Cardiac septum (tissue), 1 donor: ENCODE measurements at regions of chr1 and their contacts with region 1.

Region 1: DNA sequence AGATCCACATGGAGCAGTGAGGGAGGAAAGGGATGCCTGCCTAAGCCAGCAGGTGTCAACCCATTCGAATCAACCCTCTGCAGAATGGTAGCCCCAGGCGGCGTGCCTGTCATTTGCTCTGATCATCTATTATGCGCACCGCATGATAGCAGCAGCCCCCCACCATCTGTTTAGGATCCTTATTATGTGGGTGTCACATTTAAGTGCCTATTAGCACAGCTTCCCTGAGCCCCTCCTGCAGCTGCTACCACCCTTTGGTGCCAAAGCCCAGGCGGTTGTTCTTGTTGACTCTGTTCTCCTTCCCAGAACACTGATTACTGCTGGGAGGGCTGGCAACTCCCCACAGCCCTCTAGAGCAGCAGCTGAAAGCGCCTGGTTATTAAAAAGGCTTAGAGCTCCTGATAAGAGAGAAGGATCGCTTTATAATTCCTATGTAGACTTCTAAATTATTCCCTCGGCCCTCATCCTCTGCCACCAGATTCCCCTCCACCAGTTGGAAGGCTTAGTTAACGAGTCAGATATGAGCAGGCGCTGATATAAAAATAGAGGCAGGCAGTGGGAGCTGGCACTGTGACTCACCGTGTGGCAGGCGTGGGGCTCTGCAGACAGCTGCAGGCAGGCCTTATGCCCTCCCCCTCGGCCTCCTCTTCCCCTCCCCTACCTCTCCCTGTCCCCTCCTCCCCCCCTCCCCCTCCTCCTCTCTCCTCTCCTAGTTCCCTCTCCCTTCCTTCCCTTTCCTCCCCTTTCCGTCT is 23.0 kb downstream of the ACTA1 start:
- DNase-seq: peak; percentile 88

Region 2: GRCh38 chr1:229370601-229371021 is 40.3 kb before region 1 on chr1:
- intact Hi-C with region 1: loop called (anchors 5 kb)
- DNase-seq: peak; percentile 86

Region 3: GRCh38 chr1:229430761-229431283 is 20.0 kb after region 1 on chr1:
- intact Hi-C with region 1: loop called (anchors 1 kb)
- DNase-seq: no peak

Region 4: DNA sequence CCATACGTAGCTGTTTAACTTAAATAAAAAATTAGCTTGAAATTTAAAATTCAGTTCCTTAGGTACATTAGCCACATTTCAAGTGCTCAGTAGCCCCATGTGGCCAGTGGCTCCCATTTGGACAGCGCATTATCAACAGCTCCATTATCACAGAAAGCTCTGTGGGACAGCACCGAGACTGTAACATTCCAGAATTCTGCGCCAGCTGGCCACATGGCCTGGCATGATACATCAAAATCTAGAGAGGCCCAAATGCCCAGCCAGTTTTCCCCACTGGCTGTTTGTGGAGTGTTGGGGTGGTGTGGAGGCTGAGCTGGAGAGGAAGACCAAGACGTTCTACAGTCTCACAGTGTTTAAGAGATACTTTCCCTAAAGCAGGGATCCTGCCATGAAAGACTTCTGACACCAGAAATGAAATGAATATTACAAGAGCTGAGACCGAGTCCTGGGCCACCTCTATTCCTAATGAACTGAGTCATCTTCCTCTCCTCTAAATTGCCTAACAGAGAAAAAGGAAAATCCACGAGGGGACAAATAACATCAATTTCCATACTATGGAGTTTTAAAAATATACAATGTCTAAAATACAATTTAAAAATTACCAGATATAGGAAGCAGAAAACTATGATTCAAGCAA is 50.3 kb after region 1 on chr1:
- intact Hi-C with region 1: loop called (anchors 1 kb)
- DNase-seq: peak; percentile 81

Region 5: DNA sequence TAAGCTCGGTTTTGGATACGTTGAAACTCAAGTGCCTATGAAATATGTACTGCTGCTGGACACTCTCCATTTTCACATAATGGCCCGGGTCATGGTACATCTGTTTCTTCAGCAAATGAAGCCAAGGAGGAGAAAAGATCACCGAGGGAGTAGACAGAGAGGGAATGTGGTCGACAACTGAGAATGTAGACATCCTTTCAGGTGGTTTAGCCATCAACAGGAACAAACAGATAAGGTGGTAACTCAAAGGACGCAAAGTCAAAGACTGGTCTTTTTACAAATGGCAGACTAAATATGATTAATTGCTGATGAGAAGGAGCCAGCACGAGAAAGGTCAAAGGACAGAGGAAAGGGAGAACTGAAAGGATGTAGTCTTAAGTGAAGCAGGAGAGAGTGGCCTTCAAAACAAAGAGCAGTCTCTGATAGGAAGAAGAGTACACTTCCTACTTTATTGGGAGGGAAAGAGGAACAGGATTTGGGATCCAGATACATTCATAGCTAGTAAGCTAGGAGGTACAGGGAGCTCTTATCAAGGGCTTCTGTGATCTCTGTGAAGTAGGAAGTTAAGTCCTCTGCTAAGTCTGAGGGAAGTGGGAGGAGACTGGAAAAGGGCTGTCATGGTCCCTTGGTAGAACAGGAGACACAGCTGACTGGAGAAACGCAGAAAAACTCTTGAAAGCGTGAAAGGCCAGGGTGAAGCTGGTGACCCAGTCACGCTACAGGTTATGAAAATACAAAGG is 69.0 kb after region 1 on chr1:
- intact Hi-C with region 1: no loop called
- DNase-seq: no peak